Right ventricle myocardium superior (tissue), 1 donor: ENCODE measurements at regions of chr5 and their contacts with region 1.

Region 1: GRCh38 chr5:176660860-176661641 is 13.8 kb downstream of the TSPAN17 start:
- DNase-seq: peak; percentile 81
- ATAC-seq: peak; percentile 84

Region 2: DNA sequence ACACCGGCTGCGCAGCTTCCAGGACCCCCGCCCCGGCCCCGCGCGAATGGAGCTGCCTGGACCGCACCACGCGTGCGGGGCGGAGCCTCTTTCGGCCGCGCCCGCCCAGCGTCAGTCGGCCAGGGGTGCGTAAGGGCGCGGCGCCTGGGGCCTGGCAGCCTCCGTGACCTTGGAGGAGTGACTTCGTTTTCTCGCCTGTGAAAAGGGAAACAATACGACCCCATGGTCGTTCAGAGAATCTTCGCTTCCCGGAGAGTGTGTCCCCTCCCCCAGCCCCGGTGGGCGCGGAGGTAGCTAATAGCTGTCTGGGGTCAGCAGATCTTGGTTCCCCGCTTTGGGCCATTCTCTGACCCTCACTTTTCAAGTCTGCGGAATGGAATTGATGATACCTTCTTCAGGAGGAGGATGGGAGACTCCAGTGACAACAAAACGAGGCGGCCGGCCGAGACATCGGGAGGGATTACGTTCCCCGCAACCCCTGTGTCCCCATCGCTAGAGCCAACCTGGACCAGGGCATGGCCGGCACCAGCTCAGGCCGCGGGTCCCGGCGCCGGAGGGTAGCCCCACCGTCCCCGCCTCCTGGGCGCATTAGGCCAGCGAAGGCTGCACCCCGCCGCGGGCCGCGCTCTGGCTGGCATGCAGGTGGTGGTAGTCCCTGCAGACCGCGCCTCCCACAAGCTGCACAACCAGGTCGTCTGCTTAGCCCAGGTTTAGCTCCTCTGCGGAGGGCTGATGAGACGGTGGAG is 117.5 kb before region 1 on chr5:
- intact Hi-C with region 1: no loop called
- DNase-seq: peak; percentile 90
- ATAC-seq: peak; percentile 91

Region 3: GRCh38 chr5:176817841-176818377 is 156.9 kb after region 1 on chr5:
- intact Hi-C with region 1: loop called (anchors 10 kb)
- DNase-seq: no peak
- ATAC-seq: peak; percentile 18

Region 4: GRCh38 chr5:176959051-176959450 is 298.0 kb after region 1 on chr5:
- intact Hi-C with region 1: loop called (anchors 5 kb)
- DNase-seq: no peak
- ATAC-seq: no peak